ENCODE measurements at regions of chr6 and their contacts with region 1.

Region 1: GRCh38 chr6:108541838-108542759 is 18.6 kb upstream of the FOXO3 start:
- DNase-seq: peak; percentile 79 to 84
- H3K4me3 ChIP-seq: no peak overlapping the region
- H3K4me1 ChIP-seq: no peaks in the 10 kb centered on the region
- H3K27me3 ChIP-seq: no peaks in the 10 kb centered on the region

Region 2: DNA sequence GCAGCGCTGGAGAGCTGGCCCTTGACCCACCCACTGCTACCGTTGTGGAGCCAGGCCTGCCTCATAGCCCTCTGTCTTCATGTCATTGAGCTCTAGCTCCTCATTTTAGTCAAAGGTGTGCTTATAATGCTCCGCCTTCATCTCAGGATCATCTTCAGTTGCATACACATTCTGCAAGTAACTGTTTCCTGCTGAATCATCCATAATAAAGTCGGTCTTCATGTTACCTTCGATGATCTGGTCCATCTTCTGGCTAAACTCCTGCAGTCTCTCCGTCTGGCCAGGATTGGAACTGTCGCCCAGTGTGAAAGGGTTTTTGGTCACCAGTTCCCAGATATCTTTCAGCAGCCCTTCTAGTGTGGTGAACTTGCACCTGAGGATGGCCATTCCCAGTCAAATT is 243.6 kb after region 1 on chr6:
- in situ Hi-C with region 1: loop called (anchors 5 kb)
- DNase-seq: no peak
- H3K4me3 ChIP-seq: no peak overlapping the region
- H3K4me1 ChIP-seq: peaks cover 16% of the 10 kb centered on the region
- H3K27me3 ChIP-seq: no peaks in the 10 kb centered on the region

Region 3: DNA sequence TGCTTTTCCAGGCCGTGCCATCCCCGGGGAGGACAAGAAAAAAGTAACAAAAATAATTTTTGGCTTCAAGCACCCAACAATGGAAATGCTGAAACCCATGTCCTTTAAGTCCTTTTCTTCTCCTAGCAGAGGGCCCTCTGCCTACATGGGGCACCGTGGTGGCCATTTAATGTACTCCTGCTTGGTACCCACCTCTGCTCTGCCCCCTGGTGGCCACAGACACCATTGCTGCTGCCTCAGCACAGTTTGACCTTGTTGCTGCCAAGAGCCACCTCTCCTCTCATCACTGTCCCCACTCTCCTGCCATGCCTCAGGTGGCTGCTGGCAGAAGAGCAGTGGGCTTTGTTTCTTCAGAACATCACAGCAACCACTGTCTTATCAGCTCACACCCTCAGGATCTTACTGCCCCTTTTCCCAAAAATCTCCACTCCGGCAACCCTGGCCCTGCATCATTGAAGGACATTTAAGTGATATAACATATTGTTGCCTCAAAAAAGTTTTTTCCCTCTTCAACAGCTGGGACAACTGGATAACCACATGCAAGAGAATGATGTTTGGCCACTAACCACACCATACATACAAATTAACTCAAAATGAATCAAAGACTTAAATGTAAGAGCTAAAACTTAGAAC is 293.2 kb after region 1 on chr6:
- in situ Hi-C with region 1: loop called (anchors 5 kb)
- DNase-seq: peak; percentile 72 to 89
- H3K4me3 ChIP-seq: no peak overlapping the region
- H3K4me1 ChIP-seq: peaks cover 6% of the 10 kb centered on the region; the same call in 1 of the 2 replicates
- H3K27me3 ChIP-seq: no peaks in the 10 kb centered on the region

Region 4: DNA sequence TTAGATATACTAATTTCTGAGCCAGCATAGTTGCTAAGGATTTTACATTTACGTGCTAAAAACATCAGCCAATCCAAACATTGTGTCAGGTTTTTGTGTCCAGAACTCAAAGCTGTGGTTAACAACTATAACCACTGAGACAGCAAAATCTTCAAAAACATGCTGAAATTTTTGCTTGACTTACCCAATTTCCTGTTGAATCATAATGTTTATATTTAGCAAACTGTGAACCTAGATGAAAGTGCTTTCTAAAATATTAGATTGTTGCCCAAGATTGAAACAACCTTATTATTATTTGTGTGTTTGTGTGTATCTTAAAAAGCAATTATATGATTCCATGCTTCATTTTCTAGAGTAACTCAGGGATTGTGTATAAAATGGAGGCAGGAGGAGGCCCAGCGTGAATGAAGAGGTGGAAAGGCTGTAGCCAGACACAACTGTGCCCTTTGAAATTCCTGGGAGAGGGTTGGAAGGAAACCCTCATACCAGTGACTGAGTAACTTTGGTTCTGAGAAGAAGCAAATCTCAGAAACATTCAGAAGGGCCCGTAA is 354.1 kb after region 1 on chr6:
- in situ Hi-C with region 1: loop called (anchors 5 kb)
- DNase-seq: no peak
- H3K4me3 ChIP-seq: no peak overlapping the region
- H3K4me1 ChIP-seq: no peaks in the 10 kb centered on the region
- H3K27me3 ChIP-seq: no peaks in the 10 kb centered on the region

Region 5: DNA sequence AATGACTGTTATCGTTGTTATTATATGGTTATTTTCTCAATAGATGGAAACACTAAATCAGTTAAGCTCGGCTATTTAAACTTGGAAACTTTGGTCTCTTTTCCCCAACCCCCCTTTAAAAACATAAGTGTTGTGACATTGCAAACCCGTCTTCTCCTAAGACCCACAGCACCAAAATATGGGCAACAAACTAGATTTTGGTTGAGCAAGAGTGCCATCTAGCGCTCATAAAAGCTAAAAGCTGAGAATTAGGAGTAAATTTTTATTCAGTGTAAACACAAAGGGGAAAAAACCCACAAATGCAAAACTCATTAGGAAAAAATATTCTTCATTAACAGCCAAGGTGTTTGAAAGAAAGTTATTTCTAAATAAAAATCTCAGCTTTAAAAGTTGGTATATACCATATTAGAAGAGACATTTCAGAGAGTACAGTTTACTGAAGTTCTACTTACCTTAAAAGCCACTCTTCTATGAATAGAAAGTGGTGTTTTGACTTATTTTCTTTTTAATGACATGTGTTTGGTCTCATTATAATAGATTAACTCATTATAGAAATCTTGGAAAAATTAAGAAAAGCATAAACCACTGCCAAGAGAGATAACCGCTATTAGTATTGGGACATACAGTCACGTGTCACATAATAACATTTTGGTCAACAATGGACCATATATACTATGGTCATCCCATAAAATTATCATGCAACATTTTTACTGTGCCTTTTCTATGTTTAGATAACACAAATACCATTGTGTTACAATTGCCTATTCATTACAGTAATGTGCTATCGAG is 531.4 kb after region 1 on chr6:
- in situ Hi-C with region 1: loop called (anchors 5 kb)
- DNase-seq: peak; percentile 60 to 63
- H3K4me3 ChIP-seq: no peak overlapping the region
- H3K4me1 ChIP-seq: peaks cover 3% of the 10 kb centered on the region
- H3K27me3 ChIP-seq: no peaks in the 10 kb centered on the region

Region 6: GRCh38 chr6:109382576-109383437 is 840.7 kb after region 1 on chr6:
- in situ Hi-C with region 1: loop called (anchors 25 kb)
- DNase-seq: peak; percentile 82 to 93
- H3K4me3 ChIP-seq: peak overlapping the region; percentile 84
- H3K4me1 ChIP-seq: peaks cover 15% of the 10 kb centered on the region
- H3K27me3 ChIP-seq: no peaks in the 10 kb centered on the region

Measured in HAP-1 (cell line).